Heart right ventricle (tissue), 16 donors: ENCODE measurements at regions of chr19 and their contacts with region 1.

Region 1: DNA sequence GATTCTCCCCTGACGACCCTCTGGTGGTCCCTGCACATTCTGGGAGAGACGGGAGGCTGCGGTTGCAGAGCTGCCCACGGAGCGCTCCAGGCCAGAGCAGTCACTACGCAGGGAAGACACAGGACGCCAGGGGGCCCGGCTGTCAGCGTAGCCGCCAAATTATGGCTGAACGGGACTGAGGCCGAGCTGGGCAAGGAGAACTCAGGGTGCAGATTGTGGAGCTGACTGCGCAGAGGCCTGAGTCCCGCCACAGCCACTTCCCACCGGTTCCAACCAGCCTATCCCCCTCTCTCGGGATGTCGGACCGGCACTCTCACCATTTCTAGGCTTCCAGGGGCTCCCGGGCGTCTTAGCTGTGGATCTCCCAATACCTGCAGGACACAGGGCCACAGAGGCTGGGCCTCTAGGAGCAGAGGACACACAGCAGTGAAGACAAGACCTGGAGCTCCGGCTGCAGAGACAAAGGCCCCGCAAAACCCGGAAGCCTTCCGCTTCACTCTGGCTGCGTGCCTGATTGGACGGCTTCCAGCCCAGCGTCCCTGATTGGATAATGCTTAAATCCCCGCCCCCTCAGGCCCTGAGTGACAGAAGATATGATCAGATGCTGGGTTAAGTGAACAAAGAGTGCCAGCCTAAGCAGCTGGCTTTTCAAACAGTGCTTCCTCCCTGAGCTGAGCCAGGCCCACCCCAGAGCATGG is at the start of gene ZNF737:
- DNase-seq: peak; percentile 97 to 98
- ATAC-seq: peak; percentile 96 to 99 (median 98)
- H3K4me3 ChIP-seq: peak within 1 kb of the TSS; percentile 50 to 90 (median 78)
- H3K27ac ChIP-seq: peak within 1 kb of the TSS; percentile 81 to 92 (median 90)
- H3K4me1 ChIP-seq: peaks cover 0 to 24% (median 14%) of the 10 kb centered on the region in 9 donors
- H3K27me3 ChIP-seq: no peaks in the 10 kb centered on the region
- CTCF ChIP-seq: peak in 8 of 9 donors; percentile 12 to 60 (median 48)
- total RNA-seq, gene ZNF737: 2.7 to 8.5 (median 4.2) TPM

Region 2: DNA sequence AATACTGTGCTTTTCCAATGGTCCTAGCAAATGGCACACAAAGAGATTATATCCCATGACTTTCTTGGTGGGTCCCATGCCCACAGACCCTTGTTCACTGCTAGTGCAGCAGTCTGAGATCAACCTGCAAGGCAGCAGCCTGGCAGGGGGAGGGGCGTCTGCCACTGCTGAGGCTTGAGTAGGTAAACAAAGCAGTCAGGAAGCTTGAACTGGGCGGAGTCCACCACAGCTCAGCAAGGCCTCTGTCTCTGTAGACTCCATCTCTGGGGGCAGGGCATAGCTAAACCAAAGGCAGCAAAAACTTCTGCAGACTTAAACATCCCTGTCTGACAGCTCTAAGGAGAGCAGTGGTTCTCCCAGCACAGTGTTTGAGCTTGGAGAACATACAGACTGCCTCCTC is 82.7 kb before region 1 on chr19:
- intact Hi-C with region 1: no loop called
- DNase-seq: no peak
- ATAC-seq: no peak
- H3K4me3 ChIP-seq: no peak overlapping the region
- H3K27ac ChIP-seq: no peak overlapping the region
- H3K4me1 ChIP-seq: no peaks in the 10 kb centered on the region
- H3K27me3 ChIP-seq: no peaks in the 10 kb centered on the region
- CTCF ChIP-seq: no peak

Region 3: DNA sequence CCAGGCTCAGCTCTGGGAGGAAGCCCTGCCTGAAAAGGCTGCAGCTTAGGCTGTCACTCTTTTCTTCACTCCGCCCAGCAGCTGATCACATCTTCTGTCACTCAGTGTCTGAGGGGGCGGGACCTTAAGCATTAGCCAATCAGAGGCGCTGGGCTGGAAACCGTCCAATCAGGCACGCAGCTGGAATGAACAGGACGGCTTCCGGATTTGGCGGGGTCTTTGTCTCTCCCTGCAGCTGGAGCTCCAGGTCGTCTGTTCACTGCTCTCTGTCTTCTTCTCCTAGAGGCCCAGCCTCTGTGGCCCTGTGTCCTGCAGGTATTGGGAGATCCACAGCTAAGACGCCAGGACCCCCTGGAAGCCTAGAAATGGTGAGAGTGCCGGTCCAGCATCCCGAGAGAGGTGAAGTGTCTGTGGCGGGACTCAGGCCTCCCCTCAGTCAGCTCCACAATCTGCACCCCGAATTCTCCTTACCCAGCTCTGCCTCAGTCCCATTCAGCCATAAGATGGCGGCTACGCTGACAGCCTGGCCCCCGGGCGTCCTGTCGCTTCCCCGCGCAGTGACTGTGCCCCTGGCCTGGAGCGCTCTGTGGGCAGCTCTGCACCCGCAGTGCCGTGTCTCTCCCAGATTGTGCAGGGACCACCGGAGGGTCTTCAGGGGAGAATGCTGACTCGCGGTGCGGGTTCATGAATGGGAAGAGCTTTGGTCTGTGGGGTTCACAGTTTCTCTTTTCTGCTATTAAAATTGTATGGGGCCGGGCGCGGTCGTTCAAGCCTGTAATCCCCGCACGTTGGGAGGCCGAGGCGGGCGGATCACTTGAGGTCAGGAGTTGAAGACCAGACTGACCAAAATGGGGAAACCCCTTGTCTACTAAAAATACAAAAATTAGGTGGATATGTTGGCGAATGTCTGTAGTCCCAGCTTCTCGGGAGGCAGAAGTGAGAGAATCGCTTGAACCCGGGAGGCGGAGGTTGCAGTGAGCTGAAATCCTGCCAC is 210.9 kb after region 1 on chr19 and contains the start of gene ZNF66:
- intact Hi-C with region 1: loop called in 1 of 10 experiments (anchors 10 kb)
- DNase-seq: peak; percentile 95 to 98
- ATAC-seq: peak; percentile 99 to 100 (median 100)
- H3K4me3 ChIP-seq: peak within 1 kb of the TSS; percentile 52 to 92 (median 78)
- H3K27ac ChIP-seq: peak within 1 kb of the TSS in 9 of 10 donors; percentile 17 to 77 (median 44)
- H3K4me1 ChIP-seq: peaks cover 0 to 16% (median 6%) of the 10 kb centered on the region in 9 donors
- H3K27me3 ChIP-seq: no peaks in the 10 kb centered on the region
- CTCF ChIP-seq: no peak
- total RNA-seq, gene ZNF66: 0.49 to 1.9 (median 1.0) TPM

Region 4: DNA sequence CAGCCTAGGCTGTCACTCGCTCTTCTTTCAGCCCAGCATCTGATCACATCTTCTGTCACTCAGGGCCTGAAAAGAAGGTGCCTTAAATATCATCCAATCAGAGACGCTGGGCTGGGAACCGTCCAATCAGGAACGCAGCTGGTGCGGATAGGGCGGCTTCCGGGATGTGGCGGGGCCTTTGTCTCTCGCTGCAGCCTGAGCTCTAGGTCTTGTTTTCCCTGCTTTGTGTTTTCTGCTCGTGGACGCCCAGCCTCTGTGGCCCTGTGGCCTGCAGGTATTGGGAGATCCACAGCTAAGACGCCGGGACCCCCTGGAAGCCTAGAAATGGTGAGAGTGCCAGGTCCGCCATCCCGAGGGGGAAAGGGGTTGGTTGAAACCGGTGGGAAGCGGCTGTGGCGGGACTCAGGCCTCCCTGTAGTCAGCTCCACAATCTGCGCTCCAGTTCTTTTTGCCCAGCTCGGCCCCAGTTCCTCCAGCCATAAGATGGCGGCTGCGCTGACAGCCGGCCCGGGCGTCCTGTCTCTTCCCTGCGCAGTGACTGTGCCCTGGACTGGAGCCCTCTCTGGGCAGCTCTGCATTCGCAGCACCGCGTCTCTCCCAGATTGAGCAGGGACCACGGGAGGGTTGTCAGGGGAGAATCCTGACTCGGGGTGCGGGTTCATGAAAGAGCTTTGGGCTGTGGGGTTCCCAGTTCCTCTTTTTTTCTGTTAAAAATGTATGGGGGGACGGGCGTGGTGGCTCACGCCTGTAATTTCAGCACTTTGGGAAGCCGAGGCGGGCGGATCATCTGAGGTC is 357.8 kb after region 1 on chr19 and contains the start of gene ZNF85:
- intact Hi-C with region 1: loop called in 1 of 10 experiments (anchors 10 kb)
- DNase-seq: peak; percentile 87 to 94
- ATAC-seq: peak; percentile 97 to 100 (median 100)
- H3K4me3 ChIP-seq: peak within 1 kb of the TSS; percentile 51 to 82 (median 72)
- H3K27ac ChIP-seq: peak within 1 kb of the TSS; percentile 2 to 88 (median 82)
- H3K4me1 ChIP-seq: peaks cover 0 to 17% (median 6%) of the 10 kb centered on the region in 9 donors
- H3K27me3 ChIP-seq: no peaks in the 10 kb centered on the region
- CTCF ChIP-seq: no peak
- total RNA-seq, gene ZNF85: 1.3 to 5.9 (median 3.0) TPM